Activated naive CD4-positive, alpha-beta T cell treated with anti-CD3 and anti-CD28 coated beads for 36 hours (primary cell): ENCODE measurements at regions of chr14 and their contacts with region 1.

Region 1: GRCh38 chr14:75002392-75003249 is at the start of gene EIF2B2:
- DNase-seq: peak; percentile 99
- H3K4me3 Mint-ChIP-seq: peak within 1 kb of the TSS; percentile 99
- H3K27ac Mint-ChIP-seq: peak within 1 kb of the TSS; percentile 89
- H3K4me1 Mint-ChIP-seq: peaks cover 31% of the 10 kb centered on the region
- H3K27me3 Mint-ChIP-seq: no peaks in the 10 kb centered on the region
- total RNA-seq, gene EIF2B2: 64.8 to 65.4 TPM

Region 2: DNA sequence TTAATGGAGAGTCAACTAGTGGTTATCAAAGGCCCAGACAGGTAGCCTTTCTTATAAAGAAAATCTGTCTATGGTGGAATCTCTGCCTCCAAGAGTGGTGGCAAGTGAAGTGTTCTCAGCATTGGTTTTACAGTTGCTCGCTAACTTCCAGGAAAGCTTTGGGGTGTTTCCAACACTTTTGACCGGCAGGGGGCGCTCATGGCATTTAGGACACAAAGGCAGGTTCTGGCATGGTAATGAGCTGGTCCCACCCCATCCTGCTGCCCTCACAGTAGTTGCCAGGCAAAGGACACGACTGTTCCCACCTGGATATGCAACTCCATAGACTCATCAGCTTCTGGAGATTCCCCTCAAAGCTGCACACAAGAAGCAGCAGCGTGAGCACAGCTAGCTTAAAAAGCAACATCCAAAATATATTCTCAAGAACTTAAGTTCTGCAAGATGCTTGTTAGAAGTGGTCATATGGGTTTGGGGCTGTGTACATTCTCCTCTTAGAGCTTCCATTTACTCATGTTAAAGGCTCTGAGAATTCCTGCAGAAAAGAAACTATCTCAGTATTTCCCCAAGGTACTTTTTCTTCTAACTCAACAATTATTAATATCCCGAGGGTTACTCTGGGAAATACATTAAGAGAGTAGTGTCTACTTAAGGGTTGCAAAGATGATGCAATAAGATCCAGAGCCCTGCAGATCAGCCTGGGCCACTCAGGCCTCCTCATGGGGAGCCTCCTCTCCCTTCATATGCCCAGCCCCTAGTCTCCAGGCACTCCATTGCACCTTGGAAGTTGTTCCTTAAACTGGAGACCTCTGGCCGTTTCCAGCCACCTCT is 141.5 kb before region 1 on chr14:
- CTCF ChIA-PET with region 1: interaction called, 11 read pairs
- intact Hi-C with region 1: no loop called
- DNase-seq: peak; percentile 97
- H3K4me3 Mint-ChIP-seq: no peak overlapping the region
- H3K27ac Mint-ChIP-seq: no peak overlapping the region
- H3K4me1 Mint-ChIP-seq: peaks cover 2% of the 10 kb centered on the region
- H3K27me3 Mint-ChIP-seq: no peaks in the 10 kb centered on the region

Region 3: DNA sequence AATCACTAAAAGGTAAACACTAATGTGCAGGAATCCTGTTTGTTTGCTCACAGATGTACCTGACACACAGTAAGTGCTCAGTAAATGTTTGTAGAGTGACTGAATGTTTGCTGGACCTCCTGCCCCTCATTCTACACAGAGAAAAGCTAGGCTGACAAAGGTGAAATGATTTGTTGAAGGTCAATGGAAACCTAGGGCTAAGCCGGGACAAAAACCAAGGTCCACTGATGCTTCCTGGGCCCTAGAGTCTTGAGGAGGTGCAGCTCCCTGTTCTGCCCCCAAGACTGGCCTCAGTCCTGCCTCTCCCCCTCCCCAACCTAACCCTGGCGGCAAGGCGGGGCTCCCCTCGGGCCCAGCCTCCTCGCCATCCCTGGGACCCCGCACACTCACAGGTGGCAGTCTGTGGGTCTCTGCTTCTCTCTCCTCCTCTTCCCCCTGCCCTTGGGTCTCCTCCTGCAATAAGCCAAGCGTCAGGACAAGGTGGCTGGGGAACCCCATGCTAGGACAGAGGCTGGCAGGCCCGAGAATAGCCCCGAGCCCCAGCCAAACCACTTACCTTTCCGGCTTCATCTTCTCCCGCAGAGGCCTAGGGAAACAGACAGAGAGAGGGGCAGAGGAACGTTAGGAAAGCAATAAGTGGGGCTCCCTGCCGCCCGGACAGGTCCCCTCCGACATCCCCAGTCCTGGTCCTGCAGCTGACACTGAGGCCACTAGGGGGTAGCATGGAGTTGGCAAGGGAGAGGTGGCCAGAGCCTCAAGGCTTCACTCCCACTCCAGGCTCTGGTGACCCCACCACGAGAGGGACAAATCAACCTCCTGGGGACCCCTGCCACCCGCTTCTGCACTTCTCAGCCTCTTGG is 56.6 kb before region 1 on chr14:
- CTCF ChIA-PET with region 1: interaction called, 12 read pairs
- intact Hi-C with region 1: loop called (anchors 1 kb)
- DNase-seq: peak; percentile 87
- H3K4me3 Mint-ChIP-seq: peak overlapping the region; percentile 50
- H3K27ac Mint-ChIP-seq: peak overlapping the region; percentile 62
- H3K4me1 Mint-ChIP-seq: peaks cover 26% of the 10 kb centered on the region
- H3K27me3 Mint-ChIP-seq: peaks cover under 1% of the 10 kb centered on the region

Region 4: DNA sequence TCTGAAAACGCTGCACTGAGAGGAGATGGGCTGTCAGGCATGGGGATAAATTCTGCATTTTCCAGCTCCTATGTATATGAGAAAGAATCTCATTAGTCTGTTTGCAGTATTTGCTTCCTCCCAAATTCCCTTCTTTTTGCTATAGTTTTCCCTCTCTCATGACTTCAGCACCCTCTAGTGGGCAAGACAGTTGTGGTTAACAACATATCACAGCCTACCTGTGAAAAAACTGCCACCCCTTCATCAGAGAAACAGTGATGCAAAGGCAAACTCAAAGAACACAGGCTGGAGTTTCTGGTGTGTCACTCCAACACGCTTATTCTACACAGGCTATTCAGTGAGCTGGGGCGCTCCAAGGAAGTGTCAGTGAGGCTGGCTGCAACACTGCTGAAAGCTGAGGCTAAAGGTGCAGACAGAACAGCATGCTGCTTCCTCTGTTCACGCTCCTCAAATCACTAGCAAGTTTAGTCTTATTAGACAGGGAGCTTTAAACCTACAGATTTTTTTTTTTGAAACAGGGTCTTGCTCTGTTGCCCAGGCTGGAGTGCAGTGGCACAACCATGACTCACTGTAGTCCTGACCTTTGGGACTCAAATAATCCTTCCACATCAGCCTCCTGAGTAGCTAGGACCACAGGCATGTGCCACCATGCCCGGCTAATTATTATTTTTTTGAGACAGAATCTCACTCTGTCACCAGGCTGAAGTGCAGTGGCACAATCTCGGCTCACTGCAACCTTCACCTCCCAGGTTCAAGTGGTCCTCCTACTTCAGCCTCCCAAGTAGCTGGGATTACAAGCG is 86.2 kb after region 1 on chr14:
- CTCF ChIA-PET with region 1: interaction called, 10 read pairs
- intact Hi-C with region 1: no loop called
- DNase-seq: peak; percentile 62
- H3K4me3 Mint-ChIP-seq: no peak overlapping the region
- H3K27ac Mint-ChIP-seq: no peak overlapping the region
- H3K4me1 Mint-ChIP-seq: no peaks in the 10 kb centered on the region
- H3K27me3 Mint-ChIP-seq: no peaks in the 10 kb centered on the region

Region 5: GRCh38 chr14:75258615-75259466 is 256.2 kb after region 1 on chr14:
- CTCF ChIA-PET with region 1: no interaction called
- intact Hi-C with region 1: loop called (anchors 1 kb)
- DNase-seq: peak; percentile 99
- H3K4me3 Mint-ChIP-seq: peak overlapping the region; percentile 77
- H3K27ac Mint-ChIP-seq: peak overlapping the region; percentile 77
- H3K4me1 Mint-ChIP-seq: peaks cover 18% of the 10 kb centered on the region
- H3K27me3 Mint-ChIP-seq: no peaks in the 10 kb centered on the region